Activated CD4-positive, alpha-beta memory T cell treated with anti-CD3 and anti-CD28 coated beads, Interleukin-2, amount 10 ng/mL, durations not matched to agents 7 days and 5 days (primary cell): ENCODE measurements at regions of chr14 and their contacts with region 1.

Region 1: GRCh38 chr14:22929104-22929847 is at the start of gene PRMT5:
- DNase-seq: peak; percentile 97
- H3K4me3 Mint-ChIP-seq: no peak within 1 kb of the TSS
- H3K27ac Mint-ChIP-seq: no peak within 1 kb of the TSS
- H3K4me1 Mint-ChIP-seq: peaks cover 21% of the 10 kb centered on the region
- H3K27me3 Mint-ChIP-seq: no peaks in the 10 kb centered on the region
- total RNA-seq, gene PRMT5: 46.3 to 49.8 TPM

Region 2: DNA sequence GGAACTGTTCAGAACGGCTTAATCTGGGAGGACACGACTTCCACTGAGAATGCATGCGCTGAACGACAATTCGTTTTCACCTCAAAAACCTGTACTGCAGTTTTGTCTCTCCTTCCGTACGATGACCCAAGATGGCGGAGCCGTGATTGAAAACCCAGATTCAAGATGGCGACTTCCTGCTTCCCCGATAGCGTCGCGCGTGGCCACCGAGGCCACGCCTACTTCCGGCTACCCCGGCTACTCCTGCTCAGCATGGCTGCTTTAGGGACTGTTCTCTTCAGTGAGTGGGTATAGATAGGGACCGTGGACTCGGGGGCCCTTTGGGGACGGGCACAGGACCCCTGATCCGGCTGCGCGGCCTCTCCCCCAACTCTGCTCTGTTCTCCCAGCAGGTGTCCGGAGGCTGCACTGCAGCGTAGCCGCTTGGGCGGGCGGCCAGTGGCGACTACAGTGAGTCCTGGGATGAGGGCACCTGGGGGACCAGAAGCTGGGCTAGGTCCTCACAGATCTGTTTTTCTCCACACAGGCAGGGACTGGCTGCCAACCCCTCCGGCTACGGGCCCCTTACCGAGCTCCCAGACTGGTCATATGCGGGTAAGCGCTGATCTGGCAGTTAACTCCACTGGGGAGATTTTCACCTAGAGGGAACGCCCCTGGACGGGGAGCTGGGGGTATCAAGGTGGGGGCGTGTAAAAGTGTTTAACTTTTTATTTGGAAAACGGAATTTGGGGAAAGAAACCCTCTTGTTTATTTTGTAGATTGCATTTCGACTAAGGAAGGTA is 99.4 kb before region 1 on chr14 and contains the start of gene MRPL52:
- CTCF ChIA-PET with region 1: interaction called, 4 read pairs
- POLR2A ChIA-PET with region 1: interaction called, 11 read pairs
- DNase-seq: peak; percentile 93
- H3K4me3 Mint-ChIP-seq: peak within 1 kb of the TSS; percentile 87
- H3K27ac Mint-ChIP-seq: peak within 1 kb of the TSS; percentile 90
- H3K4me1 Mint-ChIP-seq: peaks cover 33% of the 10 kb centered on the region
- H3K27me3 Mint-ChIP-seq: no peaks in the 10 kb centered on the region
- total RNA-seq, gene MRPL52: 108 to 119 TPM

Region 3: DNA sequence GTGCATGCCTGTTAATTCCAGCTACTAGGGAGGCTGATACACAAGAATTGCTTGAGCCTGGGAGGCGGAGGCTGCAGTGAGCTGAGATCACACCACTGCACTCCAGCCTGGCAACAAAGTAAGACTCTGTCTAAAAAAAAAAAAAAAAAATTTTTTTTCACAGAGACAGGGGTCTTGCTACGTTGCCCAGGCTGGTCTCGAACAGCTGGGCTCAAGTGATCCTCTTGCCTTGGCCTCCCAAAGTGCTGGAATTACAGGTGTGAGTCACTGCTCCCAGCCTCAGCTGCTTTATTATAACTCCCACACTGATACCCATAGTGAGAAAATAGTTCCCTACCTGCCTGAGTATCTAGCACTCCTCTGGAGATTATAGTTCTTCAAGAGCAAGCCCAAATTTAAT is 16.4 kb after region 1 on chr14:
- CTCF ChIA-PET with region 1: interaction called, 21 read pairs
- POLR2A ChIA-PET with region 1: interaction called, 4 read pairs
- DNase-seq: no peak
- H3K4me3 Mint-ChIP-seq: no peak overlapping the region
- H3K27ac Mint-ChIP-seq: no peak overlapping the region
- H3K4me1 Mint-ChIP-seq: no peaks in the 10 kb centered on the region
- H3K27me3 Mint-ChIP-seq: no peaks in the 10 kb centered on the region

Region 4: GRCh38 chr14:22973217-22974032 is 44.1 kb after region 1 on chr14:
- CTCF ChIA-PET with region 1: interaction called, 9 read pairs
- POLR2A ChIA-PET with region 1: interaction called, 10 read pairs
- DNase-seq: peak; percentile 43
- H3K4me3 Mint-ChIP-seq: no peak overlapping the region
- H3K27ac Mint-ChIP-seq: no peak overlapping the region
- H3K4me1 Mint-ChIP-seq: no peaks in the 10 kb centered on the region
- H3K27me3 Mint-ChIP-seq: peaks cover 13% of the 10 kb centered on the region

Region 5: DNA sequence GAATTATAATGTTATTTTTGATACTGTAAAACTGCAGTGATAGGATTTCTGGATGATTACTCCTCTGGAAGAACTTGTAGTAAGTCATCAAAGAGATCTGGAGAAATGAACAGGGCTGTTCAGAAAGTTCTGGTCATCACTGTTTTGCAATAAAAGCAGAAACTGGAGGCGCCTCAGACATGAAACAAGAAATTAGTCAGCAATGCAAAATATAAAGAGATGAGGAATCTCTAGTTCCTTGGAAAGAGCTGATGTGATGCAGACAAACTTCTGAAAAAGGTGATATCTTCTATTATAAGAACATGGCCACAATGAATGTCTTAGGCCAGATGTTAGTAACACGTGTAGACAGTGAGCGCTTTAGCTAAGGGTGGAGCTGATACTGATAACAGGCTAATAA is 156.2 kb after region 1 on chr14:
- CTCF ChIA-PET with region 1: no interaction called
- POLR2A ChIA-PET with region 1: no interaction called
- DNase-seq: no peak
- H3K4me3 Mint-ChIP-seq: no peak overlapping the region
- H3K27ac Mint-ChIP-seq: no peak overlapping the region
- H3K4me1 Mint-ChIP-seq: peaks cover 19% of the 10 kb centered on the region
- H3K27me3 Mint-ChIP-seq: no peaks in the 10 kb centered on the region